ENCODE measurements at regions of chr12 and their contacts with region 1.

Region 1: GRCh38 chr12:118372541-118373495 is at the start of gene TAOK3:
- DNase-seq: peak; percentile 98
- ATAC-seq: peak; percentile 95
- total RNA-seq, gene TAOK3: 15.0 to 23.1 TPM

Region 2: DNA sequence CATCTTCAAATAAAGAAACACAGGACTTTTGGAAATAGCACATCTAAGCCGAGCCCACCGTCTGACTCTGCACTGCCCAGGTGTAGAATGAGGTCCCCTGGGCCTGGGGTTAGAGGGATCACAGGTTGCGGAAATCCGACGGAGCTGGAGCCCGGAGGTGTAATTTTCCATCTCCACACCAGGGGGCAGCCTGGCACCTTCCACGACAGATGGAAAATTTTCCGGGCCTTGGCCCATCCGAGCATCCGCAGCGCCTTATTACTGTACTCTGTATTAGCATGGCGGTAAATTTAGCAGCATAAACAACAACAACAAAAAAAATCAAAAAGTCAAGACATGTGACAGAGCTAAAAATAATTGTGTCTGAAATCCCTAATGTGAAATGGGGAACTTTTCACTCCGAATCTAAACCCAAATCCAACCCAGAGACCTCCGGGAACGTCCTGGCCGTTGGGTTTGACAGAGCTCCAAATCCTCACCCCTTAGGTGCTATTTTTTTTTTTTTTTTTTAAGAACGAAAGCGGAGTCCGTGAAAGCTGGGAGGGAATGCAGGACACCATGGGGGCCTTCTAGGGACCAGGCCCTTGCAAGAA is 497.9 kb before region 1 on chr12:
- intact Hi-C with region 1: loop called in 1 of 2 experiments (anchors 10 kb)
- DNase-seq: peak; percentile 76
- ATAC-seq: peak; percentile 70 to 76

Region 3: GRCh38 chr12:118120579-118121363 is 252.0 kb before region 1 on chr12:
- intact Hi-C with region 1: loop called in 1 of 2 experiments (anchors 2 kb)
- DNase-seq: peak; percentile 77
- ATAC-seq: peak; percentile 87 to 91

Region 4: GRCh38 chr12:118183705-118184104 is 189.1 kb before region 1 on chr12:
- intact Hi-C with region 1: loop called in 1 of 2 experiments (anchors 1 kb)
- DNase-seq: no peak
- ATAC-seq: no peak

Measured in left cardiac atrium (tissue), 4 donors.